Heart right ventricle (tissue), 16 donors: ENCODE measurements at regions of chr3 and their contacts with region 1.

Region 1: DNA sequence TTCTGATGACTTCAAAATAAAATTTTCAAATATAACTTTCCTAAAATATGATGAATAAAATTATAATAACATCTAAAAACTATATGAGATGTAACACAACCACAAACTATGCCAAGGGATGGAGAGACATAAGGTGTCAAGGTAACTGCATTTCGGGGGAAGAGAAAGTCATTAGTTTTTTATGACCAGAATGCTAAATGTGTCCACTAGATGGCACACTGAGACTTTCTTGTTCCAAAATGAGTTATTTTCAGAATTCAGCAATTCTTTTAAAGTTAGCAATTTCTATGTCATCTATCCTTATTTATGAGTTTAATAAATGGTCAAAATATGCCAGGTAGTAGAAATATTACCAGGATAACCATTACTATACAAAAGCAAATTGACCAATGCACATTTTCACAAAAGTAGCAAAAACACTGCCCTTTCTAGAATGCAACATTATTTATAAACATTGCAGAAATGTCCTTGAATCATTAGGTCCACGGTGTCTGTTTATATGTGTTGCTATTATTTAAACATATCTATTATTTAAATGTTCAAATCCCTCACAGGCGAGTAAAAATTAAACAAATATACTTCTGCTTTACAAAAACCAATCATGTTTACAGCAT is 374.2 kb downstream of the PLCL2 start:
- DNase-seq: peak in 1 of 2 donors; percentile 5
- ATAC-seq: no peak
- H3K4me3 ChIP-seq: no peak overlapping the region
- H3K27ac ChIP-seq: no peak overlapping the region
- H3K4me1 ChIP-seq: peaks cover 0 to 5% (median 0%) of the 10 kb centered on the region in 9 donors
- H3K27me3 ChIP-seq: no peaks in the 10 kb centered on the region
- CTCF ChIP-seq: peak; percentile 38 to 88 (median 78)

Region 2: GRCh38 chr3:17301271-17301670 is 42.3 kb after region 1 on chr3:
- intact Hi-C with region 1: no loop called
- DNase-seq: no peak
- ATAC-seq: peak in 1 of 8 donors; percentile 65
- H3K4me3 ChIP-seq: no peak overlapping the region
- H3K27ac ChIP-seq: no peak overlapping the region
- H3K4me1 ChIP-seq: peaks cover 0 to 16% (median 6%) of the 10 kb centered on the region in 9 donors
- H3K27me3 ChIP-seq: no peaks in the 10 kb centered on the region
- CTCF ChIP-seq: no peak

Region 3: DNA sequence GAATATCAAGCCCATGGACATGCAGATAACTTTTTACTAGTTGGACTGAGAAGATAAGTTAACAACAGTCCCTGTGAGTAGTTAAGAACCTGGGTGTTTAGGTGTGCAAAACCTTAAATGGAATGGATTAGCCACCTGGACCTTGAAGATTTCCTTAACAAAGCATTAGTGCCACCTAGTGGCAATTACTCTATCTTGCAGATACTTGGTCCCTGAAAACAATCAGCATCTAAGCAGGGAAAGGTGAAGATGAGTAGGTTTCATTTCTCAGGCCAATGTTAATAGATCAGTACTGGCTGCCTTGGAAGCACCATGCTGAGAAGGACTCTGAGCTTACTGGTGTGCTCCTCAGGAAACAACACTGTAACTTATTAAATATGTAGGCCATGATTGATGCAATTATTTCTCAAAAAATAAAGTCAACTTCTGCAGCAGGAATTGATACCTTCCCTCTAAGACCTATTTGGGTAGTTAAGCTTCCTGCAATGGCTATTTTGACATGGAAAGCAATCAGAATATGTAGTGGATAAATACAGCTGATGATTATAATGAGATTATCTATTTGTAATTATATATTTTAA is 154.1 kb after region 1 on chr3:
- intact Hi-C with region 1: loop called (anchors 1 to 10 kb)
- DNase-seq: peak in 1 of 2 donors; percentile 8
- ATAC-seq: peak in 4 of 8 donors; percentile 46 to 61 (median 54)
- H3K4me3 ChIP-seq: no peak overlapping the region
- H3K27ac ChIP-seq: no peak overlapping the region
- H3K4me1 ChIP-seq: no peaks in the 10 kb centered on the region
- H3K27me3 ChIP-seq: no peaks in the 10 kb centered on the region
- CTCF ChIP-seq: peak; percentile 67 to 84 (median 83)

Region 4: GRCh38 chr3:17831366-17831765 is 572.4 kb after region 1 on chr3:
- intact Hi-C with region 1: loop called in 2 of 10 experiments (anchors 10 kb)
- DNase-seq: no peak
- ATAC-seq: no peak
- H3K4me3 ChIP-seq: no peak overlapping the region
- H3K27ac ChIP-seq: no peak overlapping the region
- H3K4me1 ChIP-seq: no peaks in the 10 kb centered on the region
- H3K27me3 ChIP-seq: no peaks in the 10 kb centered on the region
- CTCF ChIP-seq: no peak

Region 5: DNA sequence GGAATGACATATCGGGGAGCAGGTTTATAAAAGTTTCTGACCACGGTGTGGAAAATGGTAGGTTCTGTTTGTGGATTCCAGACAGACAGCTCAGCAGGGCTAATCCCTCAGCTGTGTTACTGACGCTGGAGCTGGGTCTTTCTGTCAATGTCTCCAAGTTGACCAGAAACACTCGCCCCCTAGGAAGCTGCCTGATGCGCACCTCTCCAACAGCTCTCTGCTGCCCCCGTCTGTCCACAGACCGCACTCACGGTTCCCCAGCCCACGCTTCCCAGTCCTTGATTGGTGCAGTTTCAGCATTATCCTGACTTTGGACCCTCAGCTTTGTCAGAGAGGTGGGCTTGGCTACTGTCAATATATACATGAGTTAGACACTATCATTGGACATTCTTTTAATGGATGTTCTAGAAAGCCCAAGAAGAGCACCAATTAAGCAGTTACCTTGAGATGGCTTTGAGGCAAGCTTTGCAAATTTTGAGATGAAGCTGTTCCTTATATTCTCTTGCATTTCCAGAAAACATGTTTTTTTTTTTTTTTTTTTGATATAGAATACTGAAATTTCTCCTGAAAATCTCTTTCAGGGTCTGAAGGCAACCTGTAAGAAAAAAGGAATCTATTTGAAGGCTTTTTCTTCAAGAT is 582.4 kb after region 1 on chr3:
- intact Hi-C with region 1: loop called in 8 of 10 experiments (anchors 2 to 10 kb)
- DNase-seq: peak; percentile 70 to 76
- ATAC-seq: peak; percentile 74 to 91 (median 83)
- H3K4me3 ChIP-seq: no peak overlapping the region
- H3K27ac ChIP-seq: no peak overlapping the region
- H3K4me1 ChIP-seq: no peaks in the 10 kb centered on the region
- H3K27me3 ChIP-seq: peaks cover 0 to 18% (median 0%) of the 10 kb centered on the region in 7 donors
- CTCF ChIP-seq: peak; percentile 85 to 97 (median 95)